ENCODE measurements at regions of chr3 and their contacts with region 1.

Region 1: GRCh38 chr3:25962249-25962648 is 172.4 kb downstream of the OXSM start:
- DNase-seq: peak in 1 of 2 experiments; percentile 5
- H3K4me3 ChIP-seq: no peak overlapping the region
- H3K27ac ChIP-seq: no peak overlapping the region
- H3K4me1 ChIP-seq: no peaks in the 10 kb centered on the region
- H3K27me3 ChIP-seq: no peaks in the 10 kb centered on the region
- CTCF ChIP-seq: peak in 2 of 3 experiments; percentile 62 to 70; a peak in 3 of 4 replicates
- EP300 ChIP-seq: no peak
- POLR2A ChIP-seq: no peak
- RAD21 ChIP-seq: peak; percentile 71 to 73

Region 2: GRCh38 chr3:25823294-25823693 is 139.0 kb before region 1 on chr3:
- CTCF ChIA-PET with region 1: no interaction called
- POLR2A ChIA-PET with region 1: no interaction called
- DNase-seq: no peak
- H3K4me3 ChIP-seq: no peak overlapping the region
- H3K27ac ChIP-seq: no peak overlapping the region
- H3K4me1 ChIP-seq: peaks cover 0 to 9% (median 4%) of the 10 kb centered on the region in 4 experiments; a peak in 4 of 7 replicates
- H3K27me3 ChIP-seq: no peaks in the 10 kb centered on the region
- CTCF ChIP-seq: no peak
- EP300 ChIP-seq: no peak
- POLR2A ChIP-seq: no peak
- RAD21 ChIP-seq: no peak

Region 3: GRCh38 chr3:25945836-25946235 is 16.4 kb before region 1 on chr3:
- CTCF ChIA-PET with region 1: interaction called, 21 read pairs
- POLR2A ChIA-PET with region 1: no interaction called
- DNase-seq: no peak
- H3K4me3 ChIP-seq: no peak overlapping the region
- H3K27ac ChIP-seq: no peak overlapping the region
- H3K4me1 ChIP-seq: no peaks in the 10 kb centered on the region
- H3K27me3 ChIP-seq: no peaks in the 10 kb centered on the region
- CTCF ChIP-seq: no peak
- EP300 ChIP-seq: no peak
- POLR2A ChIP-seq: no peak
- RAD21 ChIP-seq: no peak

Region 4: DNA sequence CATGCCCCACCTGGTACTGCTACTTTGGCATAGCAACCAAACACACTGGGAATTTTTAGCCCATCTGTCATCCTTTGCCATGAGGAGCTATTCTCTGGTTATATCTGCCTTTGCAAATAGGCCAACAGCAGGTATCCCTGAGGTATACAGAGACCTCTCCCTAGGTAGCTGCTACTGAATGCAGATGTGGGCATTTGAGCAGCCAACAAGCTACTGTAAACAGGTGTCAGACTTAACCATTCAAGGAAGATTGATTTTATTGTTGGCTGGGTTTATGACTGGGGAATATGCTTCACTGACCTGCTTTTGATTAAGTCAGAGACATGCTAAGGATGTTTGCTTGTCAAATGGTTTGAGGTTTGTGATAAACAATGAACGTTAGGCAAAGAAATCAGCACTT is 10.9 kb after region 1 on chr3:
- CTCF ChIA-PET with region 1: interaction called, 10 read pairs
- POLR2A ChIA-PET with region 1: no interaction called
- DNase-seq: no peak
- H3K4me3 ChIP-seq: no peak overlapping the region
- H3K27ac ChIP-seq: no peak overlapping the region
- H3K4me1 ChIP-seq: 0 out of 7 replicates have a peak, but pooled peaks cover 0 to 5% (median 0%) of the 10 kb centered on the region in 4 experiments
- H3K27me3 ChIP-seq: no peaks in the 10 kb centered on the region
- CTCF ChIP-seq: no peak
- EP300 ChIP-seq: no peak
- POLR2A ChIP-seq: no peak
- RAD21 ChIP-seq: no peak

Region 5: GRCh38 chr3:26058901-26059321 is 96.7 kb after region 1 on chr3:
- CTCF ChIA-PET with region 1: no interaction called
- POLR2A ChIA-PET with region 1: no interaction called
- DNase-seq: no peak
- H3K4me3 ChIP-seq: no peak overlapping the region
- H3K27ac ChIP-seq: no peak overlapping the region
- H3K4me1 ChIP-seq: no peaks in the 10 kb centered on the region
- H3K27me3 ChIP-seq: no peaks in the 10 kb centered on the region
- CTCF ChIP-seq: no peak
- EP300 ChIP-seq: no peak
- POLR2A ChIP-seq: no peak
- RAD21 ChIP-seq: no peak

Measured in H1 (cell line).